A549 (cell line): ENCODE measurements at regions of chr2 and their contacts with region 1.

Region 1: DNA sequence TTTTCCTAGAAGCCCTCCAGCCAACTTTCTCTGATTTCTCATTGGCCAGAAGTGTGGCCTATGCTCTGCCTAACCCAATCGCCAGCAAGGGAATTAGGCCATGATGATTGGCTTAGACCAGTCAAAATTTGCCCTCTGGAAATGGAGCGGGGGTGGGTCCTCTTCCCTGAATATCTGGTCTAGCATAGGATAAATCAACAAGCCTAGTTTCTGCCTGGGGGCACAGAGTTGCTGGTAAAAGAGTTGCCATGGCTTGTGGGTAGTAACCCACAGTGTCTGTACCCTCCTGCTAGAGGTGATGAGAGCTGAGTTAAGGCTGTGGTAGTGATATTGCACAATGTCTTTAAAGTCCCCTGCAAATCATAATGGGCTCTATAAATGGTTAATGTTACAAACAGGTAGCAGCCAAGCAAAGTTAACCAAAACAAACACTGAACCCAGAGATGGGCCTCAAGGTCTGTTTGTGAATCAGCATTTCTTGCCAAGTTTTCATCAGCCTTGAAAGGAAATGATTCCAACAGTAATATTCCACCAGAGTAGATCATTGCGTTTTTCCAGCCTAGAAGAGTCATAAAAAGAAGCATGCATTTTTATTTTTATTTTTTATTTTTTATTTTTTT is 19.3 kb downstream of the GALM start:
- DNase-seq: peak; percentile 89 to 95
- ATAC-seq: peak; percentile 90 to 95
- H3K4me3 ChIP-seq: no peak overlapping the region
- H3K27ac ChIP-seq: peak overlapping the region; percentile 82 to 90
- H3K4me1 ChIP-seq: peaks cover 46% of the 10 kb centered on the region
- CTCF ChIP-seq: no peak
- EP300 ChIP-seq: peak; percentile 58 to 78; a peak in 2 of 5 replicates
- POLR2A ChIP-seq: no peak
- RAD21 ChIP-seq: peak in 1 of 2 experiments; percentile 53; a peak in 3 of 5 replicates

Region 2: GRCh38 chr2:38672445-38673391 is 12.5 kb before region 1 on chr2:
- CTCF ChIA-PET with region 1: interaction called, 11 read pairs
- POLR2A ChIA-PET with region 1: no interaction called
- DNase-seq: no peak
- ATAC-seq: no peak
- H3K4me3 ChIP-seq: no peak overlapping the region
- H3K27ac ChIP-seq: no peak overlapping the region
- H3K4me1 ChIP-seq: no peaks in the 10 kb centered on the region
- CTCF ChIP-seq: no peak
- EP300 ChIP-seq: no peak
- POLR2A ChIP-seq: no peak
- RAD21 ChIP-seq: no peak